A549 (cell line): ENCODE measurements at regions of chr1 and their contacts with region 1.

Region 1: GRCh38 chr1:112803906-112804762 is 89.0 kb upstream of the PPM1J start:
- DNase-seq: peak; percentile 64 to 65
- ATAC-seq: peak; percentile 94 to 98
- H3K4me3 ChIP-seq: no peak overlapping the region
- H3K27ac ChIP-seq: no peak overlapping the region
- H3K4me1 ChIP-seq: no peaks in the 10 kb centered on the region
- CTCF ChIP-seq: peak; percentile 78
- EP300 ChIP-seq: no peak
- POLR2A ChIP-seq: no peak
- RAD21 ChIP-seq: peak; percentile 90 to 92

Region 2: DNA sequence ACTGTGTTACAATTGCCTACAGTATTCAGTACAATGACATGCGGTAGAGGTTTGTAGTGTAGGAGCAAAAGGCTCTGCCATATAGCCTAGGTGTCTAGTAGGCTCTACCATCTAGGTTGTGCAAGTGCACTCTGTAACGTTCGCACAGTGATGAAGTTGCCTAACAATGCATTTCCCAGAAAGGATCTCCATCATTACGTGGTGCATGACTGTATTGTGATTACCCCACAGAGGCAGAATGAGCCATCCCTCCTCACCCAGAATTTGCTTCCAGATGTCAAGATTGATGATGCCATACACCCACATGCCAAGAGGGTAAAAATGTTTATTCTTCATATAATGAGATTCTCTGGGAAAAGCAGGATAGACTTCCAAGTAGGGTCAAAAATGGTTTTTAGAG is 607.4 kb before region 1 on chr1:
- CTCF ChIA-PET with region 1: no interaction called
- POLR2A ChIA-PET with region 1: no interaction called
- DNase-seq: no peak
- ATAC-seq: no peak
- H3K4me3 ChIP-seq: no peak overlapping the region
- H3K27ac ChIP-seq: no peak overlapping the region
- H3K4me1 ChIP-seq: no peaks in the 10 kb centered on the region
- CTCF ChIP-seq: no peak
- EP300 ChIP-seq: no peak
- POLR2A ChIP-seq: no peak
- RAD21 ChIP-seq: no peak

Region 3: DNA sequence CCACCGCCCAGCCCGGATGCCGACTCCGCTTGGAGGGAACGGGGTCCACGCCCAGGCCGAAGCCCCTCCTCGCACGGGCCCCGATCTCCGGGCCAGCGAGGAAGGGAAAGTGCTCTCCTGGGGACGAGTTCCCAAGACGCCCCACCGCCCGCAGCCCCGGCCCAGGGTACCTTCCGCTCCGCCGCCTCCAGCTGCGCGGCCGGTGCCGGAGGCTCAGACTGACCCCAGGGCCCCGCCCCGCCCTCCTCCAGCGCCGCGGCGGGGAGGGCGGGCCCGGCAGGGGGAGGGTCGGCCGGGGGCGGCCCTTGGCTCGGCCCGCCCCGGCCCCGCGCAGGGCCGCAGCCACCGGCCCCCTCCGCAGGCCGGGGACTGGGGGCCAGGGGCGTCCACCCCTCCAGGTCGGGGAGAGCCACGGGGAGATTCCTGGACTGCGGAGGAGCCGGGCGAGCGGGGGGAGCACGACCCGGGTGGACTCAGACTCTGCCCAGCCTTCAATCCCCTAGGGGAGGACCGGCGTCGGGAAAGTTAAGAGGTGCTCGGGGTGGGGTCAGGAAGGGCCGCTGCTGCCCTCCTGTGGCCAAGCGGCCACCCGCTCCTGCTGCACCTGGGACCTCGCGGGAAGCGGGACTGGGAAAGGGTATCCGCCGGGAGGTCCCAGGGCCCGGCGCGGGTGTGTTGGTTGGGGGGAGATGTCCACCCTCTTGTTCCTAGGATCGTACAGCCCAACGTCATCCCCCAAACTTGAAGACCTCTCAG is 97.0 kb before region 1 on chr1 and contains the start of gene RHOC:
- CTCF ChIA-PET with region 1: interaction called, 576 read pairs
- POLR2A ChIA-PET with region 1: no interaction called
- DNase-seq: peak; percentile 82 to 86
- ATAC-seq: peak; percentile 75 to 77
- H3K4me3 ChIP-seq: peak within 1 kb of the TSS; percentile 99
- H3K27ac ChIP-seq: peak within 1 kb of the TSS; percentile 98 to 100
- H3K4me1 ChIP-seq: peaks cover 34% of the 10 kb centered on the region
- CTCF ChIP-seq: peak; percentile 79
- EP300 ChIP-seq: no peak
- POLR2A ChIP-seq: peak; percentile 62
- RAD21 ChIP-seq: peak; percentile 71 to 86
- polyA plus RNA-seq, gene RHOC: 255 and 321 TPM in 2 replicates

Region 4: GRCh38 chr1:112727716-112728115 is 76.4 kb before region 1 on chr1:
- CTCF ChIA-PET with region 1: interaction called, 576 read pairs
- POLR2A ChIA-PET with region 1: no interaction called
- DNase-seq: no peak
- ATAC-seq: peak; percentile 80 to 81; a peak in 4 of 6 replicates
- H3K4me3 ChIP-seq: no peak overlapping the region
- H3K27ac ChIP-seq: no peak overlapping the region
- H3K4me1 ChIP-seq: no peaks in the 10 kb centered on the region
- CTCF ChIP-seq: no peak
- EP300 ChIP-seq: no peak
- POLR2A ChIP-seq: no peak
- RAD21 ChIP-seq: no peak

Region 5: GRCh38 chr1:112735752-112736151 is 68.4 kb before region 1 on chr1:
- CTCF ChIA-PET with region 1: interaction called, 10 read pairs
- POLR2A ChIA-PET with region 1: no interaction called
- DNase-seq: peak; percentile 23 to 28
- ATAC-seq: peak; percentile 62 to 67; a peak in 4 of 6 replicates
- H3K4me3 ChIP-seq: no peak overlapping the region
- H3K27ac ChIP-seq: no peak overlapping the region
- H3K4me1 ChIP-seq: no peaks in the 10 kb centered on the region
- CTCF ChIP-seq: no peak
- EP300 ChIP-seq: no peak
- POLR2A ChIP-seq: no peak
- RAD21 ChIP-seq: no peak

Region 6: GRCh38 chr1:112788561-112788960 is 15.6 kb before region 1 on chr1:
- CTCF ChIA-PET with region 1: interaction called, 21 read pairs
- POLR2A ChIA-PET with region 1: no interaction called
- DNase-seq: no peak
- ATAC-seq: no peak
- H3K4me3 ChIP-seq: no peak overlapping the region
- H3K27ac ChIP-seq: no peak overlapping the region
- H3K4me1 ChIP-seq: no peaks in the 10 kb centered on the region; the same call in 2 of the 3 replicates
- CTCF ChIP-seq: no peak
- EP300 ChIP-seq: no peak
- POLR2A ChIP-seq: no peak
- RAD21 ChIP-seq: no peak

Region 7: GRCh38 chr1:112818990-112819689 is 15.0 kb after region 1 on chr1:
- CTCF ChIA-PET with region 1: interaction called, 16 read pairs
- POLR2A ChIA-PET with region 1: no interaction called
- DNase-seq: no peak
- ATAC-seq: no peak
- H3K4me3 ChIP-seq: no peak overlapping the region
- H3K27ac ChIP-seq: no peak overlapping the region
- H3K4me1 ChIP-seq: no peaks in the 10 kb centered on the region
- CTCF ChIP-seq: no peak
- EP300 ChIP-seq: no peak
- POLR2A ChIP-seq: no peak
- RAD21 ChIP-seq: no peak

Region 8: DNA sequence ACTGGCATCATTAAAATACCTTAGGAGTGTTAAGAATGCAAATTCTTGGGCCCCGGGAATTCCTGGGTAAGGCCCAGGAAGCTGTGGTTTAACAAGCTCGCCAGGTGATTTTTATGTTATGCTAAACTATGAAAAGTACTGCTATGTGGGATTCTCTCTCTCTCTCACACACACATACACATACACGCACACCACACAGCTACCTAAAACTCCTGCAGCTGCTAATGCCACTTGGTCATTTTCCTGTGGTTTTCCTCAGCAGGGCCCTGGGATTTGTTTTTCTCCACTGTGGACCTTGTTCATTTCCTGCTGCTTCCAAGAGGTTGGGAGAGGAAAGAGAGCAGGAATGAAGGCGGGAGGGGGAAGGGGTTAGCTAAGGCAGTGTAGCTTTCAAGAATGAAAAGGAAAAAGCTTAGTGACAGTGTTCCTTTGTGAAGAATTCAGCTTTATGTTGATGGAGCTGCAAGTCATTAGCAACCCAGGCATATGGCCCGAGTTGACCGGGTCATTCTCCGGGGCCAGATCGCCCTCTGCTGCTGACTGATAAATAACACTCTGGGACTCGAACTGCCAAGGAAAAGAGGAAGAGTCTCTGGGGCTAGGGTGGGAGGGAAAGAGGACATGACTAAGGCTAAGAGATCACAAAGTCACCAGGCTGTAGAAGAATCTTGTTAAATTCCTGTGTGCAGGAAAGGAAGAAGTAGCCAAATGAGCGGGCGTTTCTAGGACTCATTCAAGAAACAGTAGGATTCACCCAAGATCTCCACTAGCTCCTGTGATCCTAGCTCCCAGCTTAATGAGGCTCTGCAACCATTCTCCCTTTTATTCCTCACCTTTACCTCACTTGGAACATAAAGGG is 238.4 kb after region 1 on chr1:
- CTCF ChIA-PET with region 1: interaction called, 12 read pairs
- POLR2A ChIA-PET with region 1: no interaction called
- DNase-seq: peak; percentile 55 to 57
- ATAC-seq: peak; percentile 91 to 96
- H3K4me3 ChIP-seq: no peak overlapping the region
- H3K27ac ChIP-seq: 0 out of 6 replicates have a peak overlapping the region, but pooled peaks of 1 of the 2 experiments have one; percentile 4
- H3K4me1 ChIP-seq: peaks cover 4% of the 10 kb centered on the region; the same call in 1 of the 3 replicates
- CTCF ChIP-seq: peak; percentile 52
- EP300 ChIP-seq: no peak
- POLR2A ChIP-seq: no peak
- RAD21 ChIP-seq: peak; percentile 73 to 85